Cardiac septum (tissue), 1 donor: ENCODE measurements at regions of chr15 and their contacts with region 1.

Region 1: GRCh38 chr15:50145451-50145872 is 26.4 kb upstream of the ATP8B4 start:
- DNase-seq: no peak

Region 2: DNA sequence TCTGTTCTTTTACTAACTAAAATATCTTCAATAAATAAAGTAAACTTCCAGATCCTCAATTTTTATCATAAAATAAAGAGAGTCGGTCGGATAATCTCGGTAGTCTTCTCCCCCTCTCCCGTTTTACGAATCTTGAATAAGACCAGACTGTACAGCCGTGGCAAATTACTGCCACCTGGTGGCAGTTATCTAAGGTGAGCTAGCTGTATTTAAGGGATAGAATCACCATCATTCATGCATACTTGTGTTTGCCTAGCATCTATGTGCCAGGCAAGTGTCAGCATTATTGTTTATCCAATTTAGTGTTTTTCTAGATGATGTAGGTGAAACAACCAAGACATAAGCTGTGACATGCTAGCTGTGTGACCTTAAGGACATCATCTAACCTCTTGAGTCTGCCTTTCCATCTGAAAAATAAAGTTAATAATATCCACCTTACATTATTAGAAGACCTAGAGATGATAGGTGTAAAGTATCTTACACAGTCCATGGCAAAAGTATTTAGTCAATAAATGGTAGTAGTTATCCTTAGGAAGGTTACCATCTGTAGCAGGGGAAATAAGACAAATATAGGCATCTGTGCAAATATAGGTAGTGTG is 1792.9 kb before region 1 on chr15:
- intact Hi-C with region 1: loop called (anchors 10 kb)
- DNase-seq: no peak

Region 3: DNA sequence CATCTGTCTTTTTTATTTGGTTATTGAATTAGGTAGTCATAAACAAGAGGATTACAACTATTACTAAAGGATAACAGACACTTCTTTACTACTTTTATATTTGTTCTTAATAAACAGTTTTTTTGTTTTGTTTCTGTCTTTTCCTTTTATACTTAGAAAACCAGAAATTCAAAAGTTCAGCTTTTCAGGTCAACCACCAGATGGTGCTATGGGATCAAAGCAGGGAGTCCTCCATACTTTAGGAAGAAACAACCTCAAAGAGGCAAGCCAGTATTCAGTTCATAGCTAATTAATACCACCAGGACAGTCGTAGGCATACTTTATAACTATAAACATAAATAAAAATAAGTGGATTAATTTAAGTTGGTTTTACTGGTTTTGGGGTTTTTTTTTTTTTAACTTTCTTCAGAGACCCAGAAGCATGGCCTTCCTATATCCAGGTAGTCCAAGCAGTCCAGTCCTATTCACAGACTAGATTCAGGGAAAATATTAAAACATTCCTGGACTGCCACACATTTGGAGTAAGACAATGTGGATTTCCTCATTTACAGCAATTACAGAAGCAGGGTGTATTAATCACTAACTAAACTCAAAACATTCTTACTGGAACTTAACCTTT is 1283.5 kb before region 1 on chr15:
- intact Hi-C with region 1: loop called (anchors 5 kb)
- DNase-seq: no peak

Region 4: GRCh38 chr15:49235446-49236124 is 909.9 kb before region 1 on chr15:
- intact Hi-C with region 1: loop called (anchors 10 kb)
- DNase-seq: no peak

Region 5: GRCh38 chr15:50202003-50202770 is 56.7 kb after region 1 on chr15:
- intact Hi-C with region 1: no loop called
- DNase-seq: no peak

Region 6: GRCh38 chr15:50562735-50563640 is 417.5 kb after region 1 on chr15:
- intact Hi-C with region 1: no loop called
- DNase-seq: no peak